Posterior cingulate gyrus (tissue), 11 donors: ENCODE measurements at regions of chr2 and their contacts with region 1.

Region 1: GRCh38 chr2:45643543-45644542 is 7.6 kb upstream of the PRKCE start:
- DNase-seq: peak; percentile 35 to 93 (median 70)

Region 2: DNA sequence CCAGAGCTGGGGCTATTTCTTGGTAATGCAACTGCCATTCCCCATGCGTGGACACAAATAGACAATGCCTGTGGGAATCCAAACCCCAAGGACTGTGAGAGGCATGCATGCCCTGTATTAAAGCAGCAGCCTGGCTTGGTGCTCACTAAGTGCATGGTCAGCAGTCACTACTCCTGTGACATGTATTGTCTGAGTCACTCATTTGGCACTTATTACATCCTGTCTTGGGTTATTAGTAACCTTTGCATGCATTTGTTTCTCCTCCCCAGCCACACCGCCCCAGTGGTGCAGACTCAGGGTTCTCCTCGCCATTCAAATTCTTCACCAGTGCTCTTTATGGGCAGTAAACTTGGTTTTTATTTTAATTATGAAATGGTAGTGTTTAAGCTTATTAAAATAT is 37.8 kb after region 1 on chr2:
- intact Hi-C with region 1: no loop called
- DNase-seq: no peak

Region 3: GRCh38 chr2:45706033-45706432 is 62.2 kb after region 1 on chr2:
- intact Hi-C with region 1: no loop called
- DNase-seq: no peak

Region 4: DNA sequence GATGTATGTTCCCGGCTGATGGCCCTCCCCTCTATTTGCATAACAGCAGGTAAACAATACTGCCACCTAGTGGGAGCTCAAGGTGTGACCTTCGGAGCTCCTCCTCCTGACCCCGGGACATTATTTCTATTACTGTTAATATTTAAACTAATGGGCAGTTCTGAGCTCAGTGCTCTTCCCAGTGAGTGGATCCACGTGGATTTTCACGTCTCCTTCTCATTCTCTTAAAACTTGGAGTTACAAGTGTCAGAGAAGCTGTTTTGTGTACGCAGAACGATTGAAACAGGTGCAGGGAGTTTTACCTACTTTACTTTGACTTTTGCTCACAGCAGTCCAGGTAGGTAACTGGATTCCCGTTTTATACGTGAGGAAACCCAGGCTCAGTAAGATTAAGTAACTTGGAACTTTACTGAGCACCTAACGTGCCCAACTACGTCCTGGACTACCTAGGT is 134.9 kb after region 1 on chr2:
- intact Hi-C with region 1: loop called (anchors 1 kb)
- DNase-seq: peak in 4 of 10 donors; percentile 41 to 63 (median 46)

Region 5: DNA sequence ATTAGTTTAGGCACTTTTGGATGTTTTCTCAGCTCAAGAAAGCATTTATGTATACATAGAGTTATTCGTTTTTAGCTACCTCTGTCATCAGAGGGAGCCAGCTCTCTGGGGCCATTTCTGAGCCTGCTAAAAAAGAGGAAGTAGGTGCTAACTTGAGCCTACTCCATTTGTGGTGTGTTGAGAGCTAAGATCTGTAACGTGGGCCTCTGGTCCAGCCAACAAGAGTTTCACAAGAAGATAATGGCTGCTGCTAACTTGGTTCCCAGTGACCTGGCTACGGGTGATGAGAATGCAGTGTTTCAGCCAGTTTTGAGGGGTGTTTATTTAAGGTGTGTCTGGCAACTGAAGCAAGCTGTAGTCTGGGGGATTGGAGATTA is 190.1 kb after region 1 on chr2:
- intact Hi-C with region 1: loop called (anchors 10 kb)
- DNase-seq: no peak

Region 6: GRCh38 chr2:45935791-45936622 is 292.2 kb after region 1 on chr2:
- intact Hi-C with region 1: loop called (anchors 1 kb)
- DNase-seq: peak; percentile 63 to 96 (median 81)